ENCODE measurements at regions of chr4 and their contacts with region 1.

Region 1: DNA sequence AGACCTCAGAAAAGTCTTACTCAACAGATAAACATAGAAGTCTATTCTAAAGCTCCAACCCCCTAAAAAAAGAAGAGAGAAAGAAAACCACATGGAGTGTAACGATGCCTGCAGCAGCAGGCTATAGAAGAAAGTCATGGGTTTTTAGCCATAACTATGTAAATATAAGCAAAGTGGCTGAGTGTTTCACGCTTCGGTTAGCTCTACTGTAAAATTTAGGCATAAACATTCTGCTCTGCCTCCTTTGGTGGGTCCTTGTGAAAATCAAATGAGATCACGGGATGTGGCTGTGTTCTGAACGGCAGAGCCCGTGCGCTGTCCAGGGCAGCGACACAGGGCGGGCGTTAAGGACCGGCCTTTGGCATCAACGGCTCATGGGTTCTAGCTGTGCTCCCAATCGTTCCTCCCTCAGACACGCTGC is 78.4 kb downstream of the IRF2 start:
- DNase-seq: no peak
- ATAC-seq: peak; percentile 77
- H3K4me3 Mint-ChIP-seq: peak overlapping the region; percentile 81
- H3K27ac Mint-ChIP-seq: peak overlapping the region; percentile 95
- H3K4me1 Mint-ChIP-seq: peaks cover 46% of the 10 kb centered on the region
- H3K27me3 Mint-ChIP-seq: no peaks in the 10 kb centered on the region
- CTCF ChIP-seq: no peak

Region 2: GRCh38 chr4:184282251-184282713 is 113.7 kb before region 1 on chr4:
- CTCF ChIA-PET with region 1: interaction called, 7 read pairs
- POLR2A ChIA-PET with region 1: interaction called, 22 read pairs
- intact Hi-C with region 1: loop called (anchors 1 kb)
- DNase-seq: no peak
- ATAC-seq: peak; percentile 40
- H3K4me3 Mint-ChIP-seq: peak overlapping the region; percentile 32
- H3K27ac Mint-ChIP-seq: peak overlapping the region; percentile 83
- H3K4me1 Mint-ChIP-seq: peaks cover 66% of the 10 kb centered on the region
- H3K27me3 Mint-ChIP-seq: no peaks in the 10 kb centered on the region
- CTCF ChIP-seq: no peak

Region 3: GRCh38 chr4:184310171-184310567 is 85.8 kb before region 1 on chr4:
- CTCF ChIA-PET with region 1: interaction called, 5 read pairs
- POLR2A ChIA-PET with region 1: interaction called, 20 read pairs
- intact Hi-C with region 1: loop called (anchors 1 kb)
- DNase-seq: no peak
- ATAC-seq: peak; percentile 23
- H3K4me3 Mint-ChIP-seq: no peak overlapping the region
- H3K27ac Mint-ChIP-seq: peak overlapping the region; percentile 51
- H3K4me1 Mint-ChIP-seq: peaks cover 61% of the 10 kb centered on the region
- H3K27me3 Mint-ChIP-seq: no peaks in the 10 kb centered on the region
- CTCF ChIP-seq: no peak

Region 4: DNA sequence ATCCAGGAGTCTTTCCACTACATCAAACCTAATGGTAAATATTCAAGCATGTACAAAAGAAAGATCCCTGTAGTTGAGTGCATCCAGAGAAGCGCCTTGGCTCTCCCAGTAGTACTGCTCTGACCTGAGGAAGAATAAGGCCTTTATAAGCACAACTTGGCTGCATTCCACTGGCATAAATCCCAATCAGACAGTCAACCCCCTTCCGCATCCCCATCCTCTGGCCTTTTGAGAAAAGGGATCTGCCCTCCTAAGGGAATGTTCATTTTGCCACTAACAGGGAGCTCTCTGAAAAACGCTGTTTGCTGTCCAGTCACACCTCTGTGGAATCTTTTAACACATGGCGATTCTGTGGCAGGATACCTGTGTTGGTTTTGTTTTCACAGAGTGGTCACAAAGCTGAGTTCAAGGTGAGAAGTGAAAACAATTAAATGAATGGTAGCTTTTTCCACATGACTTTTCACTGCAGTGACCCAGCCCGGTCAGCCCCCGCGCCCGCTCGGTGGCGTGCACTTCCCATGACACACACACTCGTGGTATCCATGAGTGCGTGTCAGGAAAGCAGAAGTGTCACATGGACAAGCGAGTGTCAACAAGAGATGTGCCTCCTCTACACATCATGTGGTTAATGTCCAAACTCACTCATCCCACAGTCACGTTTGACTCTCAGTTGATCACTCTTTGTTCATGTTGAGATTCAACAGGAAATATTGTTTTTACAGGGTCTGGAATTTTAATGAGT is 66.2 kb before region 1 on chr4:
- CTCF ChIA-PET with region 1: no interaction called
- POLR2A ChIA-PET with region 1: interaction called, 44 read pairs
- intact Hi-C with region 1: loop called (anchors 1 kb)
- DNase-seq: no peak
- ATAC-seq: peak; percentile 26
- H3K4me3 Mint-ChIP-seq: peak overlapping the region; percentile 47
- H3K27ac Mint-ChIP-seq: peak overlapping the region; percentile 97
- H3K4me1 Mint-ChIP-seq: peaks cover 78% of the 10 kb centered on the region
- H3K27me3 Mint-ChIP-seq: no peaks in the 10 kb centered on the region
- CTCF ChIP-seq: no peak

Region 5: GRCh38 chr4:184384056-184384809 is 11.7 kb before region 1 on chr4:
- CTCF ChIA-PET with region 1: interaction called, 3 read pairs
- POLR2A ChIA-PET with region 1: interaction called, 43 read pairs
- intact Hi-C with region 1: loop called (anchors 1 kb)
- DNase-seq: no peak
- ATAC-seq: peak; percentile 36
- H3K4me3 Mint-ChIP-seq: peak overlapping the region; percentile 72
- H3K27ac Mint-ChIP-seq: peak overlapping the region; percentile 79
- H3K4me1 Mint-ChIP-seq: peaks cover 88% of the 10 kb centered on the region
- H3K27me3 Mint-ChIP-seq: no peaks in the 10 kb centered on the region
- CTCF ChIP-seq: no peak

Region 6: GRCh38 chr4:184417802-184418511 is 22.0 kb after region 1 on chr4:
- CTCF ChIA-PET with region 1: interaction called, 3 read pairs
- POLR2A ChIA-PET with region 1: interaction called, 9 read pairs
- intact Hi-C with region 1: loop called (anchors 1 kb)
- DNase-seq: no peak
- ATAC-seq: peak; percentile 65
- H3K4me3 Mint-ChIP-seq: peak overlapping the region; percentile 55
- H3K27ac Mint-ChIP-seq: peak overlapping the region; percentile 89
- H3K4me1 Mint-ChIP-seq: peaks cover 81% of the 10 kb centered on the region
- H3K27me3 Mint-ChIP-seq: no peaks in the 10 kb centered on the region
- CTCF ChIP-seq: no peak